AG04449 (cell line): ENCODE measurements at regions of chr12 and their contacts with region 1.

Region 1: DNA sequence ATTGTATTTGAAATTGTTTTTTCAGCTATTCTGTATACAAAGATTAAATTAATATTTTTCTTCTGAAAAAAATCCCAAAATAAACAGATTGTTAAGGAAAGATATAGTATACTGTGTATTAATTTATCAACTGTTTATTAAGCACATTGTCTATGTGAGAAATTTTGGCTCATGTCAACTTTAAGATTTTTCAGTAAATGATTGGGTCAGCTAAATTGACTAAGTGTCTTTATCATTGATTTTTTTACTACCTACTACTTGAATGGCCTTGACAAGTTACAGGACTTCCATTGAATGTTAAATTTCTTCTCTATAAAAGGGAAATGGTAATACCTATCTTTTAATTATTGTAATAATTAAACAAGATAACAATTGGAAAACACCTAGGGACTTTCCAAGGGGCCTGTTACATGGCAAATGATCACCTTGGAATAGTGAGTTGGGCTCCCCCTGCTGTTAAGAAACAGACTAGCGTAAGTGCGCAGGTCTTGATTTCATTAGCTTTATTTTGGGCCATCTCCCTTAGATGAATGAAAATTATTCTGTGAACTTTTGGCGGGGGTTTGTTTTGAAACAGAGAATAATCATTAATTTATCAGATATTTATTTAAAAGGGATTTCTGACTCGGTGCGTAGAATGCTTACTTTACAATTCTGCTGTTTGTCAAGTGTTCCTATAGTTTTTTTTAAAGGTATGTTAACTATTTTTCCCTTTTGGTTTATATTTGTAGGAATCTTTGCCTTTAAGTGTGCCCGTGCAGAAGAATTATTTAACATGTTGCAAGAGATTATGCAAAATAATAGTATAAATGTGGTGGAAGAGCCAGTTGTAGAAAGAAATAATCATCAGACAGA is 14.5 kb upstream of the CCT2 start:
- DNase-seq: no peak
- H3K4me3 ChIP-seq: no peak overlapping the region
- CTCF ChIP-seq: peak; percentile 65

Region 2: DNA sequence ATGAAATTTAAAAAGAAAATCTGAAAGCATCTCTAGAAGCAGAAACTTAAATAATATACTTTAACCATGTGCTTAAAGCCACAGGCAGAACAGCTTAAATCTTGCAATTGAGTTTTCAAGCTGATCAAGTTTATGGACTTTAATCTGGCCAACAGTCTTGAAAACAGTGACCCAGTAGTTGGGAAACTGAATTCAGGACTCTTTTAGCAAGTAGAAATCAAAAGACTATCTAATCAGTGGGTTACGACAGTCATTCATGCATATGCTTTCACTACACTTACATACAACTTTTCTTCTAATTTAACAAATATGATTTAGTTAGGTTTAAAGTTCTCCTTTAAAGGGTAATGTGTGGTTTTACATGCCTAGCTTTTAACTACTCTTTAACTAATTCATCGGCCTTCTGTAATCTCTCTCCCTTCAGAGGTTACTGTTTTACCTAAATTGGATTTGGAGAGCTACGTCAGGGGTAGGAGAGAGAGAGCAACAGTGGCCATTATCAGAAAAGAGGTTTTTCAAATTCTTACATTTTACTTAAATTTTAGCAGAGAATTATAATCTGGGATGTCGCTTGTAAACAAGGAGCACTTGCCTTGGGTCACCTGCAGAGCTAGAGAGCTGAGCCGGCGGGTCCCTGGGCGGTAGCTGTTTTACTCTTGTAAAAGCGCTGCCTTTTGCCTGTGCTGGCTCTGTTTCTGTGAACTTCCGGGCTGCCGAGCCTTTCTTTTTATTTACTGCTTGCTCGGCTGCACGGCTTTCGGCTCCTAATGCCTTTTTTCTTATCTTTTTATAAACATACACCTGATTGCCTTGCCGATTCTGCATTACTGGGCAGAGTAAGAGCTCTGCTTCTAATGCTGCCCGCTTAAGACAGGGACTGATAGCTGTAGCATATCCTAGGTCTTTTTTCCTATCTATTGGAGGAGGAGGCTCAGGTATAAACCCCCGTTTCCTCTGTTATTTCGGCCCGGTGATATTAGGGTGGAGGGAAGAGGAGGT is 240.0 kb before region 1 on chr12:
- CTCF ChIA-PET with region 1: no interaction called
- POLR2A ChIA-PET with region 1: no interaction called
- DNase-seq: no peak
- H3K4me3 ChIP-seq: peak overlapping the region; percentile 32
- CTCF ChIP-seq: no peak

Region 3: DNA sequence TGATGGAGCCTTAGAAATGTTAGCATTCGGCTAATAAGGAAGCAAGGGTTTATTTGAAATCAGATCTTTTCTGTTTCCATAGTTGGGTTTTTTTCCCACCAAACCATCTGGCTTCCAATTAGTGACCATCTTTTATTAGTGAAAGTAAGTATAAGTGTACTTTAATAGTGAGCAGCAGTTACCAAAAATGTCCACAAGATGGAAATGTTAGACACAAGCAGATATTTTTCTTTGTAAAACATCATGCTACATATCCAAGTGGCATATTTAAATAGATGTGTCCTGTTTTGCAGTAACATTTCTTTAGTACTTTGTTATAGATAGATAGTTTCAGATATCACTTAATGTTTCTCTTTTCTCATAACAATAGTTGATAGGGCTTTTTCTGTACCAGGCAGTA is 182.4 kb before region 1 on chr12:
- CTCF ChIA-PET with region 1: interaction called, 231 read pairs
- POLR2A ChIA-PET with region 1: no interaction called
- DNase-seq: peak; percentile 29
- H3K4me3 ChIP-seq: no peak overlapping the region
- CTCF ChIP-seq: peak; percentile 44

Region 4: DNA sequence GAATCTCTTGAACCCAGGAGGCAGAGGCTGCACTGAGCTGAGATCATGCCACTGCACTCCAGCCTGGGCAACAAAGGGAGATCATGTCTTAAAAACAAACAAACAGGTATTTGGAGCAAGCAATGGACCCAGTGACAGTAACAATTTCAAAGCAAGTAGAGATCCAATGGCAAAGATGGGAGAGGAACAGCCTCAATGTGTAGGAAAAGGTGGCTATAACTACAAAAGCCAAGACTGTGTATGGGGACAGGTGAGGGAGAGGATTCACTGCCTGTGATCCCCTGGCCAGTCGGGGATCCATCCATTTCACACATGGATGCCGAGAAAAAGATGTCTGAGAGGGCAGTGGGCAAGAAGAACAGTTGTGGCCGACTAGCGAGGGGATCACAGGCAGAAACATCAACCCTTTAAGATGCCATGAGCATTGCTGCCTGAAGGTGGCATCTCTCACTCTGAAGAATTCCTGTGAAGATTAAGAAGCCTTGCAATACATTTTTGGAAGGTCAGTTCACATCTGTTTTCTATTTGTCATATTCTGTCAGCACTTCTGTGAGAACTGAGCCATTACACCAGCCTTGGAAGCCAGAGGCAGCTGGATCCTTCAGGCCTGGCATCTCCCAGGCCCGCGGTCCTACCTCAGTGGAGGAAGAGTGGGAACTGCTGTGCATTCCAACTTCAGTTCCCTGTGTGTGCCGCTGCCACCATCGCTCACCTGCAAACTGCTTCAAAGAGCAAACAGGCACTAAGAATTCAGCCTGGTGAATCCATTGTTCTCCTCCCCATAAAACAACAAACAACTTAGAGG is 155.1 kb before region 1 on chr12:
- CTCF ChIA-PET with region 1: interaction called, 20 read pairs
- POLR2A ChIA-PET with region 1: no interaction called
- DNase-seq: peak; percentile 81
- H3K4me3 ChIP-seq: no peak overlapping the region
- CTCF ChIP-seq: peak; percentile 82

Region 5: GRCh38 chr12:69553627-69554248 is 17.0 kb before region 1 on chr12:
- CTCF ChIA-PET with region 1: interaction called, 78 read pairs
- POLR2A ChIA-PET with region 1: interaction called, 9 read pairs
- DNase-seq: no peak
- H3K4me3 ChIP-seq: no peak overlapping the region
- CTCF ChIP-seq: no peak

Region 6: DNA sequence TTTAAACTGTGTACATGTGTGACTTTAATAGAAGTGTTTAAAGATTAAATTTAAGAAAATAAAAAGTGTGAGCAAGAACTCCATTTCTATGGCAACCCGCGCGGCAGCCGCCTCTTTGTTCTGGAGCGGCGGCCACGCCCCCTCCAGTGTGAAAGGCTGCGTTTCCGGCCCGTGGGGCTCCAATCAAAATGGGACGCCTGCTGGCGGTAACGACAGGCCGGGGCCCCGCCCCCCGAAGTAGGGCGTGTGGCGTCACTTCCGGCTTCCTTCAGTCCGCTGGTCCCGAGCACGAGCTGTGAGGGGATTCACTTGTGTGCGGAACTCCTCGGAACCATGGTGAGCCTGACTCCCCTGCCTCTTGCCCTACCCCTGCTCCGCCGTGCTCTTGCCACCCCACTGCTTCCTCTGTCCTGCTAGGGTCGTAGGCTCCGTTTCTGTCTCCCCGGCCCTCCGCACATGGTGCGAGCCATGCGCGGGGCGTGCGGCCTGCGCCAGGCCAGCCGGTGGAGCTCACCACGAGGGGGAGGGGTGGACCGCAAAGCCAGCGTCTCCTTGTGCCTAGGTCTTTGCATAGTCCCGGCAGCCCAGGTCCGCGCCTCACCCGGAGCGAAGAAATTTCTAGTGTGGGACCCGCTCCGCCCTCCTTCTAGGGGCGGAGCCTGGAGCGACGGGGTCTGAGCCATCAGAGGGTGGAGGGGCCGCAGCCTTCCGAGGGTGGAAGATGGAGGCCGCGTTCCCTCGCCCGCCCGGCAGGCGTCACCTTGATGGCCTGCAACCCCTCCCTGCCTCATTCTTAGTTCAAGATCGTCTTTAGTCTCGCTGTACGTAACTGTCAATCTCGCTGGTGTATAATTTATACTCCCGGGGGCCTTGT is 14.7 kb after region 1 on chr12 and contains the start of gene CCT2:
- CTCF ChIA-PET with region 1: interaction called, 89 read pairs
- POLR2A ChIA-PET with region 1: interaction called, 5 read pairs
- DNase-seq: peak; percentile 52
- H3K4me3 ChIP-seq: peak within 1 kb of the TSS; percentile 100
- CTCF ChIP-seq: peak; percentile 63